ENCODE measurements at regions of chr6 and their contacts with region 1.

Region 1: DNA sequence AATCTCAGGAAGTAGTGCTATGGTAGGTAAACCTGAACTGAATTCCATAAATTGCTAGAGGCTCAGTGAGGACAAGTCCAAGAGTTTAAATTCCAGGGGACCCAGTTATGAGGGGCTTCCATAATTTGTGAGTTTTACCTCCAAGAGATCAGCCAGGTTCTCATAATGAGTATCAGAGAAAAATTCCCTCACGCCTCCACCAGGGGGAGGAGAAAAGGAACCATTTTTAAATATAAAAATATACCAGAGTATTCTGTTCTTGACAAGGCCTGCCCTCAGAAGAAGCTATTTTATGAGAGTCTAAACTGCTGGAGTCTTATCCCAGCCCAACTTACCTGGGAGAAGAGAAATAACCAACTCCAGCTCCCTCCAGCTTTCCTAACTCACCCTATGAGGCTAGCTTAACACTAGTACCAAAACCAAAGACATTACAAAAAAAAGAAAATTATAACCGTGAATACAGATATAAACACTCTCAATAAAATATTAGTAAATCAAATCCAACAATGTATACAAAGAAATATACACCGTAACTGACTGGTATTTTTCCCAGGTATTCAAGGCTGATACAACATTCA is 158.7 kb downstream of the TFAP2A start:
- DNase-seq: peak; percentile 63
- ATAC-seq: peak; percentile 64
- H3K4me3 ChIP-seq: no peak overlapping the region
- H3K27ac ChIP-seq: no peak overlapping the region
- H3K4me1 ChIP-seq: no peaks in the 10 kb centered on the region
- H3K27me3 ChIP-seq: no peaks in the 10 kb centered on the region
- CTCF ChIP-seq: peak; percentile 71

Region 2: DNA sequence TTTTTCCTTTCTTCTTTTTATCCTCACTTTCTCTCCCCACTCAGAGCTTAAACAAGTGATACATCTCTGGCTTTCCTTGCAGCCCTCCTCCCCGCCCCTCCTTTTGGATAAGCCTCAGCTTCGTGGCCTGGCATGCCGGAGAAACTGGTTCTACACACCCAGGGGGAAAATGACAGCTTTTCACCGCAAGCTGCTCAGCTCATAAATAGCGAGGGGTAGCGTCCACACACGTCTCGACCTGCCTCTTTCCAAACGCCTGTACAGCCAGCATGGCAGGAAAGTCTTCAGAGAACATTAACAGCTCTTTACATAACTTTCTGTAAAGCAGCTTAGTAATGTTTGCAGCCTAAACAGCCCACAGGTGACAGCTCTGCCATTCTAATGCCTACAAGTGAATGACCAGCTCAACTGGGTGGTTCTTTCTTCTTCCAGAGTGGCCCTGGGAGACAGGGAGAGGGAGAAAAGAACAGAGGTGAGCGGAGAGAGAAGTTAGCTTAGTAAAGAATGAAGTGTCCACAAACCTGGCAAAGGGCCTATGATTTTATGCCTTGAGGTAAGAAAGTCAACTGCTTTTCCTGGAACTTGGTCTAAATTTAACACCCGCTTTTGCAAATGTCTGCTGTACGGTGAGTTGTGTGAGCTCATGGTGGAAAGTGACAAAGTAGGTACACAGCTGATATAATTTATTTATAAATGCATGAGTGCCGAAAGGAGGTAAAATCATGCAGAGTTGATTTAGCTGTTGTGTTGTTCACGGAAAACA is 92.8 kb before region 1 on chr6:
- CTCF ChIA-PET with region 1: no interaction called
- POLR2A ChIA-PET with region 1: no interaction called
- intact Hi-C with region 1: no loop called
- DNase-seq: peak; percentile 83
- ATAC-seq: peak; percentile 37
- H3K4me3 ChIP-seq: peak overlapping the region; percentile 54
- H3K27ac ChIP-seq: peak overlapping the region; percentile 65
- H3K4me1 ChIP-seq: peaks cover 21% of the 10 kb centered on the region
- H3K27me3 ChIP-seq: no peaks in the 10 kb centered on the region
- CTCF ChIP-seq: no peak

Region 3: DNA sequence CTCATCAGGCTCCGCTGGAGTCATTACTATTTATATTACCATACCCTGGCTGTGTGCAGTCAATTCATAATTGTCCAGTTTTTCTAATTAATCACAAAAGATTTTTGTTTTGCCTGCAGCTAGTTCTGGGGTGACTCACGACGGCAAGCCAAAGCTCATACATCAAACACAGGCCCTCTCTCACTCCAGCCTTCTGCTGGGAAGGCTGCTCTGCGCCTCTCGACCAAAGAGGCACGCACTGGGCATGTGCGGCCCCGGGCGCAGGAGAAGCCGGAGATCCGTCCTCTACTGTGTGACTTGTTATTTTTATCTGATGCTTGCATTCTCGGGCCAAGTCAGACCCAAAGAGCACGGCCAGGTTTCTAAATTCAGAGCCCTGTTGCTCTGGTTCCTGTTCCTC is 60.1 kb after region 1 on chr6:
- CTCF ChIA-PET with region 1: no interaction called
- POLR2A ChIA-PET with region 1: no interaction called
- intact Hi-C with region 1: loop called (anchors 5 kb)
- DNase-seq: peak; percentile 80
- ATAC-seq: peak; percentile 96
- H3K4me3 ChIP-seq: no peak overlapping the region
- H3K27ac ChIP-seq: no peak overlapping the region
- H3K4me1 ChIP-seq: peaks cover 13% of the 10 kb centered on the region
- H3K27me3 ChIP-seq: no peaks in the 10 kb centered on the region
- CTCF ChIP-seq: no peak

Measured in PC-3 (cell line).